ENCODE measurements at regions of chr7 and their contacts with region 1.

Region 1: GRCh38 chr7:31744294-31744874 is 57.4 kb downstream of the PPP1R17 start:
- DNase-seq: peak in 4 of 6 donors; percentile 22 to 65 (median 22)
- ATAC-seq: peak in 3 of 4 donors; percentile 91
- H3K4me3 ChIP-seq: no peak overlapping the region
- H3K27ac ChIP-seq: no peak overlapping the region
- H3K4me1 ChIP-seq: no peaks in the 10 kb centered on the region
- H3K27me3 ChIP-seq: no peaks in the 10 kb centered on the region
- CTCF ChIP-seq: peak; percentile 60 to 83 (median 72)

Region 2: GRCh38 chr7:31633894-31634494 is 110.4 kb before region 1 on chr7:
- intact Hi-C with region 1: no loop called
- DNase-seq: peak in 4 of 6 donors; percentile 50 to 80 (median 60)
- ATAC-seq: peak; percentile 97 to 100 (median 100)
- H3K4me3 ChIP-seq: no peak overlapping the region
- H3K27ac ChIP-seq: peak overlapping the region in 1 of 4 donors; percentile 48
- H3K4me1 ChIP-seq: peaks cover 6 to 8% (median 6%) of the 10 kb centered on the region in 3 donors
- H3K27me3 ChIP-seq: no peaks in the 10 kb centered on the region
- CTCF ChIP-seq: peak; percentile 34 to 71 (median 60)

Region 3: GRCh38 chr7:32204361-32205018 is 460.1 kb after region 1 on chr7:
- intact Hi-C with region 1: loop called in 2 of 3 experiments (anchors 10 kb)
- DNase-seq: peak in 5 of 6 donors; percentile 28 to 70 (median 34)
- ATAC-seq: peak; percentile 88 to 98 (median 96)
- H3K4me3 ChIP-seq: peak overlapping the region in 1 of 4 donors; percentile 4
- H3K27ac ChIP-seq: no peak overlapping the region
- H3K4me1 ChIP-seq: no peaks in the 10 kb centered on the region
- H3K27me3 ChIP-seq: no peaks in the 10 kb centered on the region
- CTCF ChIP-seq: peak; percentile 26 to 74 (median 50)

Region 4: DNA sequence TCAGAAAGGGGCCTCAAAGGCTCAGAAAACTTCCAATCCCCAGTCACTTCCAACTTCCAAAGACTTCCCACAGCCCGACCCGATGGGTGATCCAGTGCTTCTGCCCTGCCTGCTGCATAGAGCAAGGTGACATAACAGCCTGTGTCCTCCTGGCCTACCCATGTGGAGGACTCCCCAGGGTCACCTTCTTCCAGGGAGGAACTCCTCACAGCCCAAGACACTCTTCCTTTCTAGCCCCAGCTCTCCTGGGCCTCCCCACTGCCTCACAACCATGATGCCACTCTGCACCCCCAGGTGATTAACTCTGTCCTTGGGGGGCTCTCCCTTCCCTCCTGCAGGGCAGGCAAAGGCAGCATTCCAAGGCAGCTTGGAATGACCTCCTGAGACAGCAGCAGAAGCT is 484.2 kb after region 1 on chr7:
- intact Hi-C with region 1: no loop called
- DNase-seq: no peak
- ATAC-seq: no peak
- H3K4me3 ChIP-seq: no peak overlapping the region
- H3K27ac ChIP-seq: no peak overlapping the region
- H3K4me1 ChIP-seq: no peaks in the 10 kb centered on the region
- H3K27me3 ChIP-seq: no peaks in the 10 kb centered on the region
- CTCF ChIP-seq: no peak

Region 5: GRCh38 chr7:32275216-32275979 is 531.0 kb after region 1 on chr7:
- intact Hi-C with region 1: no loop called
- DNase-seq: no peak
- ATAC-seq: no peak
- H3K4me3 ChIP-seq: no peak overlapping the region
- H3K27ac ChIP-seq: no peak overlapping the region
- H3K4me1 ChIP-seq: no peaks in the 10 kb centered on the region
- H3K27me3 ChIP-seq: no peaks in the 10 kb centered on the region
- CTCF ChIP-seq: no peak

Measured in pancreas (tissue), 10 donors.